ENCODE measurements at regions of chr6 and their contacts with region 1.

Region 1: GRCh38 chr6:159941286-159942113 is 27.4 kb upstream of the IGF2R start:
- DNase-seq: peak; percentile 4 to 24
- ATAC-seq: peak; percentile 79 to 80; a peak in 5 of 6 replicates
- H3K4me3 ChIP-seq: no peak overlapping the region
- H3K27ac ChIP-seq: no peak overlapping the region
- H3K4me1 ChIP-seq: no peaks in the 10 kb centered on the region
- CTCF ChIP-seq: peak; percentile 46
- EP300 ChIP-seq: no peak
- POLR2A ChIP-seq: no peak
- RAD21 ChIP-seq: peak; percentile 67 to 80

Region 2: DNA sequence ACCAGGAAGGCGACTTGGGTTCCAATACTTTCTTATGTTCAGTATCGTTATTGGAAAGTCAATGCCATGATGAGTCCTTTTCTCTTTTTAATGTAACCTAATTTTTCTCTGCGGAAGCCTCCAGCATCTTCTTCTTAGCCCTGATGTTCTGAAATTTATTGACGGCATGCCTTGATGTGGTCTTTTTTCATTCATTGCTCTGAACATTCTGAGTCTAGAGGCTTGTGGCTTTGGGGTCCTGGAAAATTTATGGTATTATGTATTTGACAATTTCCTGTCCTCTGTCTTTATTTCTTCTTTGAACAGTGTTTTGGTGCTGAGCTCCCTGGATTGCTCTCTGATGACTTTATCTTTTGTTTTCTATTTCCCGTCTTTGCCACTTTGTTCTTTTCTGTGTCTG is 79.4 kb before region 1 on chr6:
- CTCF ChIA-PET with region 1: interaction called, 18 read pairs
- POLR2A ChIA-PET with region 1: no interaction called
- DNase-seq: no peak
- ATAC-seq: no peak
- H3K4me3 ChIP-seq: no peak overlapping the region
- H3K27ac ChIP-seq: no peak overlapping the region
- H3K4me1 ChIP-seq: no peaks in the 10 kb centered on the region
- CTCF ChIP-seq: no peak
- EP300 ChIP-seq: no peak
- POLR2A ChIP-seq: no peak
- RAD21 ChIP-seq: no peak

Region 3: GRCh38 chr6:159953091-159953601 is 11.6 kb after region 1 on chr6:
- CTCF ChIA-PET with region 1: interaction called, 18 read pairs
- POLR2A ChIA-PET with region 1: no interaction called
- DNase-seq: no peak
- ATAC-seq: no peak
- H3K4me3 ChIP-seq: no peak overlapping the region
- H3K27ac ChIP-seq: no peak overlapping the region
- H3K4me1 ChIP-seq: no peaks in the 10 kb centered on the region
- CTCF ChIP-seq: no peak
- EP300 ChIP-seq: no peak
- POLR2A ChIP-seq: no peak
- RAD21 ChIP-seq: no peak

Region 4: GRCh38 chr6:160477901-160478300 is 536.4 kb after region 1 on chr6:
- CTCF ChIA-PET with region 1: no interaction called
- POLR2A ChIA-PET with region 1: no interaction called
- DNase-seq: no peak
- ATAC-seq: no peak
- H3K4me3 ChIP-seq: no peak overlapping the region
- H3K27ac ChIP-seq: no peak overlapping the region
- H3K4me1 ChIP-seq: no peaks in the 10 kb centered on the region
- CTCF ChIP-seq: no peak
- EP300 ChIP-seq: no peak
- POLR2A ChIP-seq: no peak
- RAD21 ChIP-seq: no peak